ENCODE measurements at regions of chr13 and their contacts with region 1.

Region 1: GRCh38 chr13:100674848-100675660 is 459 bp upstream of the TMTC4 start:
- DNase-seq: peak; percentile 99 to 100
- H3K4me3 ChIP-seq: peak overlapping the region; percentile 93 to 94
- H3K27ac ChIP-seq: peak overlapping the region; percentile 75 to 82
- H3K4me1 ChIP-seq: peaks cover 3 to 10% of the 10 kb centered on the region in 2 donors
- H3K27me3 ChIP-seq: no peaks in the 10 kb centered on the region
- CTCF ChIP-seq: peak in 2 of 3 experiments; percentile 39 to 41

Region 2: DNA sequence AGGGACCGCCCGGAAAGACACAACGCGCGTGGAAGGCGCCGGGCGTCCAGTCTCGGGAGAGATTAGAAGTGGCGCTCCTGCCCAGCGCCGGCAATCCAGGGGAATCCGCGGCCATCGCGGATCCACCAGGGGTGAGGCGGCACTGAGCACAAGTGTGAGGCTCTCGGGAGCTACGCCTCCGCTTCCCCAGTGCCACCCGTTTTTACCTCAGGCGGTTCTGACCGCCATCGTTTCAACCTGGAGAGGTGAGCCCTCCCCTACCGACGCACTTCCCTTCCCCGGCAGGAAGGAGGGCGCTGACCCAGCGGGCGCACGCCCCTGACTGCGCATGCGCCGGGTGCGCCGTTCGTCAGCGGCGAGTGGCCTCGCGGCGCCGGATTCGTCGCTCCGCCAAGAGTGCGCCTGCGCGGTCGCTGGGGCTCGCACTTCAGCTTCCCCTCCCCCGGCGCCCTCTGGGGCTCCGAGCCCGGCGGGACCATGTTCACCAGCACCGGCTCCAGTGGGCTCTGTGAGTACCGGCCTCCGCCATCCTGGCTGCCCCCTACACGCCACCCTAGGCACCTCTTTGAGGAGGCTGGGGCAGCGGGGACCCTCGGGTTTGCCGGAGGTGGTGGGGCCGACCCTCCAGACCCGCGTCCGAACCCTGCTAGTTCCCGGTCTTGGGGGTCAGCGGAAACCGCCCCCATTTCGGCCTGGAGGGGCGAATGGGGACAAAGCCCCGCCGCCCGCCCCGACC is 1474.5 kb before region 1 on chr13 and contains the start of gene UBAC2:
- intact Hi-C with region 1: loop called (anchors 2 kb)
- DNase-seq: peak; percentile 79 to 97
- H3K4me3 ChIP-seq: peak within 1 kb of the TSS; percentile 82 to 96
- H3K27ac ChIP-seq: peak within 1 kb of the TSS; percentile 98
- H3K4me1 ChIP-seq: peaks cover 0 to 6% of the 10 kb centered on the region in 2 donors
- H3K27me3 ChIP-seq: no peaks in the 10 kb centered on the region
- CTCF ChIP-seq: no peak
- total RNA-seq, gene UBAC2: 67.8 TPM

Region 3: DNA sequence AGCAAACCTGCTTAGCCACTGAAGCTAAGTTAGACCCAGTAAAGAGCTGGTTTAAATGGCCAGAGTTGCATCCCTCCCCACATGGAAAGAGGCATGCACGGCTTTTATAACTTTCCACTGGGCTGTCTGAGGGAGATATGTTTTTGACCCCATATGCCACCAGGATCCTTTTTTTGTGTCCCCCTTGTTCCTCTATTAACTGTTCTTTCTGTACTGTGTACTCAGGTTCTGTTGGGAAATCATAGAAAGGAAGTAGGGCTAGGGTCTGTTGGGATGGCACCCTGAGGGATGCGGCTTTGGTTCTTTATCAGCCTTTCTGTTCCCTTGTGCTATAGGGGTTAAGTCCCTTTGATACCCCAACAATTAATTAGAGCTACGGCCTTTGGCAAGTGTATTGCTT is 1186.0 kb before region 1 on chr13:
- intact Hi-C with region 1: no loop called
- DNase-seq: no peak
- H3K4me3 ChIP-seq: no peak overlapping the region
- H3K27ac ChIP-seq: no peak overlapping the region
- H3K4me1 ChIP-seq: no peaks in the 10 kb centered on the region
- H3K27me3 ChIP-seq: no peaks in the 10 kb centered on the region
- CTCF ChIP-seq: no peak

Region 4: DNA sequence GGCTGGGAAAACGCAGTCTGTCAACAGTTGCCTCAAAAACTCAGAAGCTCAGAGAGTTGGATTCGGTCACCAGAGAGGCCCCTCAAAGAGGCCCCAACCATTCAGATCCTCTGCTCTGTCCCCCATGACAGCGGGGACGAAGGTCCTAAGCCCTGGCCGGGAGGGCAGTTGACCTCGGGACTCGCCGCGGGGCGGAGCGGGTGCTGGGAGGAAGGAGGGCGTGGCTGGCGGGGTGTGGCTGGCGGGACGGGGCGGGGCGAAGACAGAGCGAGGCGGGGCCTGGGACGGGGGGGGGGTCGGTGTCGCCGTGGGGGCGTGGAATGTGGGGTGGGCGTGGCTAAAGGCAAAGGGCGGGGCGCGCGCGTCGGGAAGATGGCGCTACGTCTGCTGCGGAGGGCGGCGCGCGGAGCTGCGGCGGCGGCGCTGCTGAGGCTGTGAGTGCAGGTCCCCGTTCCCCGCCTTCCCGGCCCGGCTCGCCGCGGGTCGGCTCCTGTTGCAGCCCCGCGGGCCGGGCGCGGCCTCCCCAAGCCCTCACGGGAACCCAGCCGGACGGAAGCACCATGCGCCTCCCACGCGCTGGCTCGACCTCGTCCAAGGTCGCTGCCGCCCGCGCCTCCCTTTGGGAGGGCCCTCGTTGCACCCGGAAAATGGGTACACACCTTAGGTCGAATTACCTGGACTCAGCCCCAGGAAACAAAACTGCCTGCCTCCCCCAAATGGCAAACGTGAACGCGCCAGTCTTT is 1068.6 kb before region 1 on chr13:
- intact Hi-C with region 1: loop called (anchors 2 kb)
- DNase-seq: peak; percentile 54 to 91
- H3K4me3 ChIP-seq: peak within 1 kb of the TSS; percentile 61 to 96
- H3K27ac ChIP-seq: peak within 1 kb of the TSS; percentile 60 to 88
- H3K4me1 ChIP-seq: peaks cover 0 to 3% of the 10 kb centered on the region in 2 donors
- H3K27me3 ChIP-seq: no peaks in the 10 kb centered on the region
- CTCF ChIP-seq: peak in 1 of 3 experiments; percentile 1

Region 5: GRCh38 chr13:100088644-100089464 is 586.2 kb before region 1 on chr13 and contains the start of gene PCCA:
- intact Hi-C with region 1: loop called (anchors 2 kb)
- DNase-seq: peak; percentile 77 to 96
- H3K4me3 ChIP-seq: peak within 1 kb of the TSS; percentile 87 to 96
- H3K27ac ChIP-seq: peak within 1 kb of the TSS; percentile 75 to 80
- H3K4me1 ChIP-seq: peaks cover 0 to 8% of the 10 kb centered on the region in 2 donors
- H3K27me3 ChIP-seq: no peaks in the 10 kb centered on the region
- CTCF ChIP-seq: no peak
- total RNA-seq, gene PCCA: 3.6 TPM

Region 6: GRCh38 chr13:102394158-102395053 is 1719.4 kb after region 1 on chr13:
- intact Hi-C with region 1: loop called (anchors 10 kb)
- DNase-seq: peak; percentile 58 to 95
- H3K4me3 ChIP-seq: peak overlapping the region; percentile 70 to 84
- H3K27ac ChIP-seq: peak overlapping the region; percentile 72 to 80
- H3K4me1 ChIP-seq: peaks cover 0 to 7% of the 10 kb centered on the region in 2 donors
- H3K27me3 ChIP-seq: no peaks in the 10 kb centered on the region
- CTCF ChIP-seq: no peak

Measured in ascending aorta (tissue), 2 donors.